Right ventricle myocardium inferior (tissue), 1 donor: ENCODE measurements at regions of chr2 and their contacts with region 1.

Region 1: DNA sequence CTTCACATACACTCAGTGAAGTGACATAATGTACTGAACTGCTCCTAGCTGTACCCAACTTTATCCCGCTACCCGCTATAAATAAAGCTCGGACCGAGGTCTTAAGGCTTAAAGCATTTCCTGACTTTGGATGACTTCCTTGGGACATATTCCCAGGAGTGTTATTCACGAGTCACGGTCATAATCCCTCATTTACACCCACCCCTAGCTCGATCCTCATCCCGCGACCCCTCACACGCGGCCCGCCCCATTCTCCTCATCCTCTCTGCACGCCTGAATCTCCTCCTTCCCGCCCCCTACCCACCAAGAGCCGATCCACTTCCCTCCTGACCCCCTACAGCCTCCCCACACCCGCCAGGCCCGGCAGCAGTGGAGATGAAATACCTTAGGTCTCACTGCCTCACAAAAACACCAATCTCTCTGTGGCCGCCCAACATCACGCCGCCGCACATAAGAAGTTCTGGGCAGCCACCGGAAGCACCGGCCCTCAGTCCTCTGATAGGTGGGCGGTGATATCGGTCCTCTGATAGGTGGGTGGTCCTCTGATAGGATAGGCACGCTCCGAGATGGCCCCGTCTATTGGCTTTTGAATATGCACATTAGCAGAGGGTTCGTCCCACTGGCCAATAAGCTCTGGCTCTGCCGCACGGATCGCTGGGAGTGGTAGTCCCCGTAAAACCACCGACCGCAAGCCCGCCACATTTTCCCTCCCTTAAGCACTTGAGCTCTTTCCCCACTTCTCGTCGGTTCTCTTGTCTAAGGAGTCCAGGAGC is at the start of gene WDCP:
- DNase-seq: peak; percentile 96
- ATAC-seq: peak; percentile 99
- total RNA-seq, gene WDCP: 8.1 TPM

Region 2: GRCh38 chr2:23939987-23940717 is 107.0 kb before region 1 on chr2 and contains the start of gene UBXN2A:
- intact Hi-C with region 1: loop called (anchors 2 kb)
- DNase-seq: peak; percentile 91
- ATAC-seq: peak; percentile 93
- total RNA-seq, gene UBXN2A: 21.2 TPM

Region 3: DNA sequence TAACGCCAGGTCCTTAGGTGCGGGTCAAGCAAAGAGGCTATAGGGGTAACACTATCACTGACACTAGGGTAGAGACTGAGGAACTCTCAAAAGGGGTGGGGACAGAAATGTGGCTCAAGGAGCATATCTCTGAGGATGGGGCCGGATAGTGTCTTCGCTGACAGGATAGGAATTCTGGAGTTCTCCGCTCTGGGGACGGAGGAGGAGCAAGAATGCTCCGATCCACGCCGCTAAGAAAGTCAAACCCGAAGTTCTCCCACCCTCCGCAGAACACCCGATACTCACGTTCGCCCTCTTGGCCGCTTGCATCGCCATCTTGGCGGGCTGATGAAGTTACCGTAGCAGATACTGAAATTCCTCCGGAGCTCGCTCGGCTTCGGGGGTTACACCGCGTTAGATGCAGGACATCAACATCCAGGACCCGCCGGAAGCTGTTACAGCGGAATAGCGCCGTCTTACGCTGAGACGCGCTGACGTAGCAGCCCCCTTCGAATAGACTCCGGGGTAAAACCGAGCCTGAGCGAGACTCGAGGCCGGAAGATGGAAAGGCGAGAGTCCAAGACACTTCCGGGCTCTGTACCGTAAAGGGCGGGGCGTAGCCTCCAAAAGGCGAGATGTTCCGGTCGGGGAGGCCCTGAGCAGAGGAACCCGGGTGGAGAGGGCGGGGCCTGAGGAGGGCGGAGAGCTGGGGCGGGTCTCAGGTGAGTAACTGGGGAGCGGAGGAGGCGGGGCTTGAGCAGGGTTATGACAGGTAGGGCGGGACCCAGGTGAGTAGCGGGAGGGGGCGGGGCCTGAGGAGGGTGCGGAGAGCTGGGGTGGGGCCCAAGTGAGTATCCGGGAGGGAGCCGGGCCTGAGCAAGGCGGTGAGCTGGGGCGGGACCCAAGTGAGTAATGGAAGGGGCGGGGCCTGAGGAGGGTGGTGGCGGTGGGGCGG is 29.1 kb after region 1 on chr2 and contains the start of gene SF3B6:
- intact Hi-C with region 1: loop called (anchors 1 kb)
- DNase-seq: peak; percentile 98
- ATAC-seq: peak; percentile 97
- total RNA-seq, gene SF3B6: 53.7 TPM